HCT116 (cell line): ENCODE measurements at regions of chr1 and their contacts with region 1.

Region 1: GRCh38 chr1:40951943-40952743 is 27.4 kb upstream of the CTPS1 start:
- DNase-seq: peak; percentile 62
- ATAC-seq: peak; percentile 87
- H3K4me3 ChIP-seq: no peak overlapping the region
- H3K27ac ChIP-seq: no peak overlapping the region
- H3K4me1 ChIP-seq: peaks cover 0 to 28% of the 10 kb centered on the region in 2 experiments; a peak in 2 of 4 replicates
- H3K27me3 ChIP-seq: no peaks in the 10 kb centered on the region
- CTCF ChIP-seq: peak; percentile 91 to 96 (median 95)
- POLR2A ChIP-seq: no peak
- RAD21 ChIP-seq: peak; percentile 100

Region 2: GRCh38 chr1:40612345-40612831 is 339.8 kb before region 1 on chr1:
- CTCF ChIA-PET with region 1: no interaction called
- POLR2A ChIA-PET with region 1: no interaction called
- RAD21 ChIA-PET with region 1: no interaction called
- intact Hi-C with region 1: loop called (anchors 5 kb)
- DNase-seq: peak; percentile 48
- ATAC-seq: peak; percentile 99
- H3K4me3 ChIP-seq: no peak overlapping the region
- H3K27ac ChIP-seq: no peak overlapping the region
- H3K4me1 ChIP-seq: peaks cover 0 to 4% of the 10 kb centered on the region in 2 experiments; a peak in 1 of 4 replicates
- H3K27me3 ChIP-seq: no peaks in the 10 kb centered on the region
- CTCF ChIP-seq: peak; percentile 90 to 93 (median 92)
- POLR2A ChIP-seq: no peak
- RAD21 ChIP-seq: peak; percentile 94

Region 3: GRCh38 chr1:40849801-40850592 is 102.1 kb before region 1 on chr1:
- CTCF ChIA-PET with region 1: interaction called, 202 read pairs
- POLR2A ChIA-PET with region 1: interaction called, 3 read pairs
- RAD21 ChIA-PET with region 1: interaction called, 7 to 11 read pairs
- intact Hi-C with region 1: loop called (anchors 1 kb)
- DNase-seq: peak; percentile 46
- ATAC-seq: peak; percentile 85
- H3K4me3 ChIP-seq: no peak overlapping the region
- H3K27ac ChIP-seq: no peak overlapping the region
- H3K4me1 ChIP-seq: peaks cover 0 to 25% of the 10 kb centered on the region in 2 experiments; a peak in 2 of 4 replicates
- H3K27me3 ChIP-seq: no peaks in the 10 kb centered on the region
- CTCF ChIP-seq: peak; percentile 85 to 89 (median 86)
- POLR2A ChIP-seq: no peak
- RAD21 ChIP-seq: peak; percentile 85

Region 4: DNA sequence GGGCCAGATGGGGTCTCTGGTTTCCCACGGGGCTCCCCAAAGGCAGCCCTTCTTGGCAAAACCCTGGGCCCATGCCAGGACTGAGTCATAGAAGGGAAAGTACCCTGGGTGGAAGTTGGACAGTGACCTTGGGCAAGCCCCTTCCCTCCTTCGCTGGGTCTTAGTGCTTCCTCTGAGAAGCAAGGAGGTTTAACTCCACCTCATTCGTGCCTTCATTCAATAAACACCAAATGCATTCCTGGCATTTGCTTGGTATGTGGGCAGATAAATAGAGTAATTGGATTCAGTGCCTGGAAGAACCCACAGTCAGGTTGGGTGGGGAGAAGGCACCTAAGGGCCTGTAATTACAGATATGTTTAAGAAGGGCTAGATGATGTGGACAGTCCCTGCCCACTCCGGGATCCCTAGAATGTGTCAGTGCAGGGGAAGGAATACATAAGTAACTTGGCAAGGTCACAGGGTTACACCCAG is 53.7 kb before region 1 on chr1:
- CTCF ChIA-PET with region 1: interaction called, 5 read pairs
- POLR2A ChIA-PET with region 1: no interaction called
- RAD21 ChIA-PET with region 1: no interaction called
- intact Hi-C with region 1: loop called (anchors 2 kb)
- DNase-seq: no peak
- ATAC-seq: 0 out of 2 replicates have a peak, but pooled peaks have one; percentile 3
- H3K4me3 ChIP-seq: peak overlapping the region in 1 of 2 experiments; percentile 43; a peak in 1 of 4 replicates
- H3K27ac ChIP-seq: peak overlapping the region; percentile 70
- H3K4me1 ChIP-seq: peaks cover 37 to 71% of the 10 kb centered on the region in 2 experiments
- H3K27me3 ChIP-seq: no peaks in the 10 kb centered on the region
- CTCF ChIP-seq: no peak
- POLR2A ChIP-seq: no peak
- RAD21 ChIP-seq: no peak

Region 5: DNA sequence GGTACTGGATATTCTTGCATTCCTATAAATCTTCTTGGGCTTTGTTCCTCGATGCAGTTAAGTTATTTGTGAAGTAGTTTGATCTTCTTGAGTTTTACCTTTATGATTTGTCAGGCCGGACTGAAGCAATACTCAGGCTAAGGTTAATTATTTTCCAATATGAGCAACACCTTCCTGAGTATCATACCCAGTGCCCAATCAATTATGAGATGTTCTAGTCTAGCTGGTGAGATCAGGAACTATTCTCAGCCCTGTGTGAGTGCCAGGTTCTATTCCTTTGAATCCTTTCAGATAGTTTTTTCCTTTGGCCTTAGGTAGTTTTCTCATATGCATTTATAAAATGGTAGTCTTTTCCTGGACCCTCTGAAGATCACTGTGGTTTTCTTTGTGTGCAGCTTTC is 197.4 kb after region 1 on chr1:
- CTCF ChIA-PET with region 1: no interaction called
- POLR2A ChIA-PET with region 1: no interaction called
- RAD21 ChIA-PET with region 1: no interaction called
- intact Hi-C with region 1: no loop called
- DNase-seq: no peak
- ATAC-seq: no peak
- H3K4me3 ChIP-seq: no peak overlapping the region
- H3K27ac ChIP-seq: no peak overlapping the region
- H3K4me1 ChIP-seq: no peaks in the 10 kb centered on the region
- H3K27me3 ChIP-seq: no peaks in the 10 kb centered on the region
- CTCF ChIP-seq: no peak
- POLR2A ChIP-seq: no peak
- RAD21 ChIP-seq: no peak